PC-9 (cell line): ENCODE measurements at regions of chr7 and their contacts with region 1.

Region 1: DNA sequence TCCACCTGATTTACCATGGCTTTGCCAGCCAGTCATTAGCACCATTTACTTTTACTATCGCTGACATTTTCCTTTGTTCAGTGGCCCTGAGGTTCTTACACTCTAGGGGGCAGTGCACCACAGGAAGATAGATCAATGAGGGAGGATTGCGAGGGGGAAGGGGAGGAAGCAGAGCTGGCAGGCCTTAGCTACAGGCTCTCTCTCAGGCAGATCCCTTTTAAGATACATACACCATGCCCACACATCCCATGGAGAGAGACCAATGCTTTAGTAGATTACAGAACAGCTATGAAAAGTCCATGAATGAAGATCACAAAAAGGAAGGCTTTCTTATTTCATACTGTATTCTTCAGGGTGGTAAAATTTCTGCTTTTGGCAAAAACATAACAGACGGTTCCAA is 47.4 kb downstream of the DENND11 start:
- DNase-seq: peak; percentile 56 to 69
- H3K4me3 ChIP-seq: no peak overlapping the region
- H3K27ac ChIP-seq: no peak overlapping the region
- H3K4me1 ChIP-seq: peaks cover 6% of the 10 kb centered on the region
- H3K27me3 ChIP-seq: no peaks in the 10 kb centered on the region
- CTCF ChIP-seq: peak; percentile 79

Region 2: GRCh38 chr7:140479062-140479738 is 1175.4 kb before region 1 on chr7 and contains the start of gene MKRN1:
- CTCF ChIA-PET with region 1: no interaction called
- POLR2A ChIA-PET with region 1: no interaction called
- intact Hi-C with region 1: loop called (anchors 1 kb)
- DNase-seq: peak; percentile 92 to 98
- H3K4me3 ChIP-seq: peak within 1 kb of the TSS; percentile 86
- H3K27ac ChIP-seq: peak within 1 kb of the TSS; percentile 71
- H3K4me1 ChIP-seq: peaks cover 26% of the 10 kb centered on the region
- H3K27me3 ChIP-seq: no peaks in the 10 kb centered on the region
- CTCF ChIP-seq: no peak
- total RNA-seq, gene MKRN1: 166 and 182 TPM in 2 replicates

Region 3: GRCh38 chr7:140653319-140654108 is 1001.0 kb before region 1 on chr7:
- CTCF ChIA-PET with region 1: no interaction called
- POLR2A ChIA-PET with region 1: no interaction called
- intact Hi-C with region 1: loop called (anchors 5 kb)
- DNase-seq: peak; percentile 63 to 64
- H3K4me3 ChIP-seq: no peak overlapping the region
- H3K27ac ChIP-seq: no peak overlapping the region
- H3K4me1 ChIP-seq: peaks cover 55% of the 10 kb centered on the region
- H3K27me3 ChIP-seq: no peaks in the 10 kb centered on the region
- CTCF ChIP-seq: peak; percentile 95

Region 4: GRCh38 chr7:141262101-141263090 is 392.2 kb before region 1 on chr7:
- CTCF ChIA-PET with region 1: no interaction called
- POLR2A ChIA-PET with region 1: no interaction called
- intact Hi-C with region 1: loop called (anchors 10 kb)
- DNase-seq: no peak
- H3K4me3 ChIP-seq: no peak overlapping the region
- H3K27ac ChIP-seq: no peak overlapping the region
- H3K4me1 ChIP-seq: no peaks in the 10 kb centered on the region
- H3K27me3 ChIP-seq: peaks cover 23% of the 10 kb centered on the region
- CTCF ChIP-seq: peak; percentile 37; the same call in 1 of the 2 replicates

Region 5: GRCh38 chr7:141685285-141686023 is 30.9 kb after region 1 on chr7:
- CTCF ChIA-PET with region 1: interaction called, 18 read pairs
- POLR2A ChIA-PET with region 1: no interaction called
- intact Hi-C with region 1: no loop called
- DNase-seq: peak in 1 of 2 experiments; percentile 22
- H3K4me3 ChIP-seq: no peak overlapping the region
- H3K27ac ChIP-seq: no peak overlapping the region
- H3K4me1 ChIP-seq: no peaks in the 10 kb centered on the region
- H3K27me3 ChIP-seq: no peaks in the 10 kb centered on the region
- CTCF ChIP-seq: no peak

Region 6: GRCh38 chr7:141785706-141786552 is 131.4 kb after region 1 on chr7:
- CTCF ChIA-PET with region 1: interaction called, 5 read pairs
- POLR2A ChIA-PET with region 1: no interaction called
- intact Hi-C with region 1: loop called (anchors 1 kb)
- DNase-seq: peak; percentile 18 to 60
- H3K4me3 ChIP-seq: no peak overlapping the region
- H3K27ac ChIP-seq: no peak overlapping the region
- H3K4me1 ChIP-seq: no peaks in the 10 kb centered on the region
- H3K27me3 ChIP-seq: no peaks in the 10 kb centered on the region
- CTCF ChIP-seq: peak; percentile 85

Region 7: DNA sequence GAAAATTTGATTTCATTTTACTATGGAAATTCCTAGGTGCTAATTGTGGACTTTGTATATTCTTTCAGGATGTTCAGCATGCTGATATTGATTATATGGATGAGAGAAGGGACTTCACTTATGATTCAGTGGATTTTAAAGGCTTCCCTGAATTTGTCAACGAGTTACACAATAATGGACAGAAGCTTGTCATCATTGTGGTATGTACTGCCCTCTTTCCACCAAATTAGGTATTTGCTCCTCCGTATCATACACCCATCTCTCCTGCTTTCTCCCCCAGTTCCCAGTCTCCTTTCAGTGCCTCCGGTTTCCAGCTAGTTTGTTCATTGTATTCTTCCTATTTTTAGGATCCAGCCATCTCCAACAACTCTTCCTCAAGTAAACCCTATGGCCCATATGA is 375.7 kb after region 1 on chr7:
- CTCF ChIA-PET with region 1: no interaction called
- POLR2A ChIA-PET with region 1: interaction called, 7 read pairs
- intact Hi-C with region 1: loop called (anchors 5 kb)
- DNase-seq: peak in 1 of 2 experiments; percentile 60
- H3K4me3 ChIP-seq: no peak overlapping the region
- H3K27ac ChIP-seq: no peak overlapping the region
- H3K4me1 ChIP-seq: peaks cover 15% of the 10 kb centered on the region
- H3K27me3 ChIP-seq: no peaks in the 10 kb centered on the region
- CTCF ChIP-seq: peak; percentile 32; the same call in 1 of the 2 replicates